Activated B cell treated with CpG ODN at 0.5 μM for 24 hours (primary cell): ENCODE measurements at regions of chr10 and their contacts with region 1.

Region 1: GRCh38 chr10:103685880-103686669 is 169.3 kb downstream of the SH3PXD2A start:
- DNase-seq: peak; percentile 71
- ATAC-seq: peak; percentile 96
- H3K4me3 Mint-ChIP-seq: no peak overlapping the region
- H3K27ac Mint-ChIP-seq: no peak overlapping the region
- H3K4me1 Mint-ChIP-seq: peaks cover 15% of the 10 kb centered on the region
- H3K27me3 Mint-ChIP-seq: no peaks in the 10 kb centered on the region
- CTCF ChIP-seq: peak; percentile 61

Region 2: DNA sequence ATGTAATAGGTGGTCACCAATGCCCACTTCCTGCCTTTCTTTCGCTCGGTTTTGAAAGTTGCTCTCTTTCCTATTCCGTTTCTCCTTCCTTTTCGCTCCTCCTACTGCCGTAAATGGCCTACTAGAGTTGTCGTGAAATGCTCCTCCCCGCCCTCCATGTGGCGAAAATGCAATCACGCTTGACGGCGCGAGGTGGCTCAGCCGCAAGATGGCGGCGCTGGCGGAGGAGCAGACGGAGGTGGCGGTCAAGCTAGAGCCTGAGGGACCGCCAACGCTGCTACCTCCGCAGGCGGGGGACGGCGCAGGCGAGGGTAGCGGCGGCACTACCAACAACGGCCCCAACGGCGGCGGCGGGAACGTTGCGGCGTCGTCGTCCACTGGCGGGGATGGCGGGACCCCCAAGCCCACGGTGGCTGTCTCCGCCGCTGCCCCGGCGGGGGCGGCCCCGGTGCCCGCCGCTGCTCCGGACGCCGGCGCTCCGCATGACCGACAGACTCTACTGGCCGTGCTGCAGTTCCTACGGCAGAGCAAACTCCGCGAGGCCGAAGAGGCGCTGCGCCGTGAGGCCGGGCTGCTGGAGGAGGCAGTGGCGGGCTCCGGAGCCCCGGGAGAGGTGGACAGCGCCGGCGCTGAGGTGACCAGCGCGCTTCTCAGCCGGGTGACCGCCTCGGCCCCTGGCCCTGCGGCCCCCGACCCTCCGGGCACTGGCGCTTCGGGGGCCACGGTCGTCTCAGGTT is 318.1 kb before region 1 on chr10 and contains the start of gene TAF5:
- CTCF ChIA-PET with region 1: no interaction called
- POLR2A ChIA-PET with region 1: no interaction called
- intact Hi-C with region 1: no loop called
- DNase-seq: peak; percentile 79
- ATAC-seq: peak; percentile 72
- H3K4me3 Mint-ChIP-seq: peak within 1 kb of the TSS; percentile 90
- H3K27ac Mint-ChIP-seq: peak within 1 kb of the TSS; percentile 87
- H3K4me1 Mint-ChIP-seq: peaks cover 12% of the 10 kb centered on the region
- H3K27me3 Mint-ChIP-seq: no peaks in the 10 kb centered on the region
- CTCF ChIP-seq: no peak
- total RNA-seq, gene TAF5: 3.6 and 3.8 TPM in 2 replicates

Region 3: GRCh38 chr10:103598654-103599115 is 87.4 kb before region 1 on chr10:
- CTCF ChIA-PET with region 1: interaction called, 16 read pairs
- POLR2A ChIA-PET with region 1: no interaction called
- intact Hi-C with region 1: loop called (anchors 1 kb)
- DNase-seq: no peak
- ATAC-seq: no peak
- H3K4me3 Mint-ChIP-seq: no peak overlapping the region
- H3K27ac Mint-ChIP-seq: no peak overlapping the region
- H3K4me1 Mint-ChIP-seq: no peaks in the 10 kb centered on the region
- H3K27me3 Mint-ChIP-seq: no peaks in the 10 kb centered on the region
- CTCF ChIP-seq: no peak

Region 4: GRCh38 chr10:103605359-103606095 is 80.5 kb before region 1 on chr10:
- CTCF ChIA-PET with region 1: interaction called, 27 read pairs
- POLR2A ChIA-PET with region 1: interaction called, 6 read pairs
- intact Hi-C with region 1: loop called (anchors 1 kb)
- DNase-seq: no peak
- ATAC-seq: no peak
- H3K4me3 Mint-ChIP-seq: no peak overlapping the region
- H3K27ac Mint-ChIP-seq: no peak overlapping the region
- H3K4me1 Mint-ChIP-seq: no peaks in the 10 kb centered on the region
- H3K27me3 Mint-ChIP-seq: no peaks in the 10 kb centered on the region
- CTCF ChIP-seq: no peak